ENCODE measurements at regions of chr9 and their contacts with region 1.

Region 1: GRCh38 chr9:33623658-33624586 is 99.9 kb downstream of the ANKRD18B start:
- DNase-seq: peak; percentile 61
- H3K4me3 Mint-ChIP-seq: no peak overlapping the region
- H3K27ac Mint-ChIP-seq: no peak overlapping the region
- H3K4me1 Mint-ChIP-seq: peaks cover 7% of the 10 kb centered on the region
- H3K27me3 Mint-ChIP-seq: peaks cover 27% of the 10 kb centered on the region

Region 2: DNA sequence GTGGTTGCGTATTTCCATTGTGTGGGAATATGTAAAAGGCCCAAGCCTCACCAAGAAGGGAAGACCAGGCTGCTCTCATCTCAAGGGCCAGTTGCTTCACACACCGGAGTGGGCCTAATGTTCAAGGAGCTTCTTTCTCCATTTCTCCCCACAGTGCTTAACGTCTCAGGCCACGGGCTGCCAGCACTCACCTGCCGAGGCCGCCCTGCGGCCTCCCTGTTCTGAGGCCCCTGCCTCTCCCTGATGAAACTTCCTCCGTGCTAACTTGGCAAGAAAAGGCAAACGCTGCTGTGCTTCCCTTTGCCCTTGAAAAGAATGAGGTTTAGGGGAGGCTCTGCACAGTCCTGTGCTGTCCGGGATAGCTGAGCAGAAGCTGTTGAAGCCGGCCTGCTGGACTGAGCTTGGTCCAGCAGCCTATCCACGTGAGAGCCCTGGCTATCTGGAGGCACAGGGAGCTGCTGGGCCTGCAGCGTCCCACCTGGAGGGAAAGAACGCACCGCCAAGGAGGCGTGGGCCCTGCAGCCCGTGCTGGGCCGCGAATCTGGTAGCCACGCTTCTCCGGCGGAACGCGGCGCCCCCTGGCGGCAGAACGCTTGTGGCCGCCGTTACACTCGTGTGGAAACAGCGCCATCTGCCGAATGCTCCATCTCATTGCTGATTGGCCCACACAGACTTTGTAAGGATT is 97.9 kb after region 1 on chr9:
- intact Hi-C with region 1: loop called (anchors 1 kb)
- DNase-seq: peak; percentile 80
- H3K4me3 Mint-ChIP-seq: no peak overlapping the region
- H3K27ac Mint-ChIP-seq: no peak overlapping the region
- H3K4me1 Mint-ChIP-seq: no peaks in the 10 kb centered on the region
- H3K27me3 Mint-ChIP-seq: peaks cover 13% of the 10 kb centered on the region

Region 3: GRCh38 chr9:33765411-33765810 is 141.5 kb after region 1 on chr9:
- intact Hi-C with region 1: no loop called
- DNase-seq: no peak
- H3K4me3 Mint-ChIP-seq: no peak overlapping the region
- H3K27ac Mint-ChIP-seq: no peak overlapping the region
- H3K4me1 Mint-ChIP-seq: peaks cover 2% of the 10 kb centered on the region
- H3K27me3 Mint-ChIP-seq: peaks cover 7% of the 10 kb centered on the region

Region 4: GRCh38 chr9:33778700-33779351 is 154.9 kb after region 1 on chr9:
- intact Hi-C with region 1: loop called (anchors 2 kb)
- DNase-seq: peak; percentile 27
- H3K4me3 Mint-ChIP-seq: no peak overlapping the region
- H3K27ac Mint-ChIP-seq: no peak overlapping the region
- H3K4me1 Mint-ChIP-seq: peaks cover 6% of the 10 kb centered on the region
- H3K27me3 Mint-ChIP-seq: peaks cover 28% of the 10 kb centered on the region

Measured in activated T-helper 1 cell treated with anti-CD3 and anti-CD28 coated beads, Interleukin-12 subunit alpha, Interleukin-12 subunit beta, Interleukin-2, Interleukin-4 antibody, amounts not matched to agents 30 ng/mL and 10 ng/mL and 1 ng/mL, durations not matched to agents 14 hours and 24 hours and 36 hours (primary cell).